Ascending aorta (tissue), 2 donors: ENCODE measurements at regions of chr2 and their contacts with region 1.

Region 1: DNA sequence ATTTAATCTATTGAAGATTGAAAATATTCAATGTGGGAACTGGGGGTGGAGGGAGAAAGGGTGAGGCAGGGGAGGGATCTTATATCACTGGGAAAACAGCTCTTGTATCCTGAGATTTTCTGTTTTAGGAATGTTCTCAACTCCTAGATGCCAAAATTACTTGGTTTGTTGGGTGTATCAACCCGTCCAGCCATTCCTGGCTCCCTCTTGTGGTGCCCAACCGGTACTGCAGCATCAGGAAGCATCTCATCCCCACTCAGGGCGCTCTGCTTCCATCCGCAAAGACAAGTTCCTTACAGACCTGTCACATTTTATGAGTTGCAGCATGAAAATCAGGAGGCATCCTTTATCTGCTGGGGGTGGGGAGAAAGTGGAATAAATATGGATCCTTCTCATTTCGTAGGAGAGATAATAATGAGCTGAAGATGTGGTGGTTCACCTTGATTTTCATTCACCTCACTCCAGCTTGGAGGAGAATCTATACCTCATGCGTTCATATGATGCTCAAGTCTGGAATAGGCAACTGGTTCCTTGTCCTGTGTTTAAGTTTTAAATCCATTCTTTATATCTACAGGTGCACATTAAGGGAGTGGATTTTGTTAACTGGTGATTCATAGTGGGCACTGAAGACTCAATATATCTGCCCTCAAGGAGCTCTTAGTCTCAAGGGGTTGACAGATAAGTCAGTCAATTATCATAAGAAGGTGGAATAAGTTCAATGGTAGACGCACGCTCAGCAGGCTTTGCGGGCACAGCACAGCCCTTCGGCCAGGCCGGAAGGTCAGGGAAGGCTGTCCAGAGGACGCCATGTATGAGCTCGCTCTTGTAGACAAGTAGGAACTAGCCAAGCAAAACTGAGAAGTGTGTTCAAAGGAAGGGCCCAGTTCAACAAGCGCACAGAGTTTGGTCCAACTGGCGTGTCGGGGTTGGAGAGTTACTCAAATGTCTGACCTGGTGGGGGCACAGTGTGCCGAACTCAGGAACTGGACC is 127.3 kb downstream of the RNF144A start:
- DNase-seq: peak in 1 of 2 donors; percentile 76
- H3K4me3 ChIP-seq: no peak overlapping the region
- H3K27ac ChIP-seq: no peak overlapping the region
- H3K4me1 ChIP-seq: no peaks in the 10 kb centered on the region
- H3K27me3 ChIP-seq: no peaks in the 10 kb centered on the region
- CTCF ChIP-seq: peak; percentile 63 to 84 (median 82)

Region 2: DNA sequence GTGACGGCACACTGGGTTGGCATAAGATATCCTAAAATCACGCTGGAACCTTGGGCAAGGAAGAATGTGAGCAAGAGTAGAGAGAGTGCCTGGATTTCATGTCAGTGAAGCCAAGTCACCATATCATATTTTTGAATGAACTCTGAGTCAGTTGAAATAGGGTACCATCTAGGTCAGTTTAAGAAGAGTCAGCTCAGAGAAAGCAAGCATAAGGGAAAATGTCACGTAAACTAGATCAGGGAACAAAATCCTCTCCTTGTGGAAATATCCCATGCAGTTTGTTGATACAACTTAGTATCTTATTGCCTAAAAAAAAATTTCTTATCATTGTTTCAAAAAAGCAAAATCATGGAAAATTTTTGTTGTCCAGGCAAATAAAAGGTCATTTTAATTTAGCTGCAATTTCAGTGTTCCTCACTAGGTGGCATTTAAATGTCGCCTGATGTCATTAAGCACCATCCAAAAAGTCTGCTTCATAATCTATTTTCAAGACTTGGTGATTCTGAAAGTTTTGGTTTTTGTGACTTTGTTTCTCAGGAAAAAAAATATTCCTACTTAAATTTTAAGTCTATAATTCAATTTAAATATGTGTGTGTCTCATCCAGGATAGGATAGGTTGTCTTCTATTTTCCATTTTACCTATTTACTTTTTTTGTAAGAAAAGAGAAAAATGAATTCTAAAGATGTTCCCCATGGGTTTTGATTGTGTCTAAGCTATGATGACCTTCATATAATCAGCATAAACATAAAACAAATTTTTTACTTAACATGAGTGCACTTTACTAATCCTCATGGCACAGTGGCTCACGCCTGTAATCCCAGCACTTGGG is 147.4 kb before region 1 on chr2:
- intact Hi-C with region 1: loop called (anchors 5 kb)
- DNase-seq: no peak
- H3K4me3 ChIP-seq: no peak overlapping the region
- H3K27ac ChIP-seq: peak overlapping the region in 1 of 2 donors; percentile 21
- H3K4me1 ChIP-seq: no peaks in the 10 kb centered on the region
- H3K27me3 ChIP-seq: no peaks in the 10 kb centered on the region
- CTCF ChIP-seq: peak; percentile 50 to 63 (median 60)